A673 (cell line): ENCODE measurements at regions of chr17 and their contacts with region 1.

Region 1: GRCh38 chr17:58232707-58233156 is 5.7 kb upstream of the LPO start:
- DNase-seq: peak; percentile 33
- H3K4me3 ChIP-seq: no peak overlapping the region
- H3K27ac ChIP-seq: no peak overlapping the region
- H3K4me1 ChIP-seq: peaks cover 5% of the 10 kb centered on the region
- H3K27me3 ChIP-seq: peaks cover 18% of the 10 kb centered on the region
- CTCF ChIP-seq: no peak

Region 2: DNA sequence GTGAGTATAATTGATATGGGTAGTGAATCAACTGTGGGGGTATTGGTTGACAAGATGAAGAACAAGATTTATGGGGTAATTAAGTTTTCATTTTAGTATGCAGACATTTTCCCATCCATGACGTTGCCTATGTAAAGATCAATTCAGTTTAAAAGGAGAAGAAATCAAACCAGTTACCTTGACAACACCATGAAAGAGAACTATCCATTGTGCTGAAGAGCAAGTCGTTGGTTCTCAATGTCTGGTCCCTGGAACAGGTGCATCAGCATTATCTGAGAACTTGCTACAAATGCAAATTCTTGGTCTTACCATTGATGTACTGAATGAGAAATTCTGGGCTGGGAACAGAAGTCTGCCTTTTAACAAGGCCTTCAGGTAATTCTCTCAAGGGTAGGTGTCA is 66.8 kb before region 1 on chr17:
- CTCF ChIA-PET with region 1: no interaction called
- POLR2A ChIA-PET with region 1: no interaction called
- intact Hi-C with region 1: no loop called
- DNase-seq: no peak
- H3K4me3 ChIP-seq: no peak overlapping the region
- H3K27ac ChIP-seq: no peak overlapping the region
- H3K4me1 ChIP-seq: no peaks in the 10 kb centered on the region
- H3K27me3 ChIP-seq: peaks cover 98% of the 10 kb centered on the region
- CTCF ChIP-seq: no peak

Region 3: DNA sequence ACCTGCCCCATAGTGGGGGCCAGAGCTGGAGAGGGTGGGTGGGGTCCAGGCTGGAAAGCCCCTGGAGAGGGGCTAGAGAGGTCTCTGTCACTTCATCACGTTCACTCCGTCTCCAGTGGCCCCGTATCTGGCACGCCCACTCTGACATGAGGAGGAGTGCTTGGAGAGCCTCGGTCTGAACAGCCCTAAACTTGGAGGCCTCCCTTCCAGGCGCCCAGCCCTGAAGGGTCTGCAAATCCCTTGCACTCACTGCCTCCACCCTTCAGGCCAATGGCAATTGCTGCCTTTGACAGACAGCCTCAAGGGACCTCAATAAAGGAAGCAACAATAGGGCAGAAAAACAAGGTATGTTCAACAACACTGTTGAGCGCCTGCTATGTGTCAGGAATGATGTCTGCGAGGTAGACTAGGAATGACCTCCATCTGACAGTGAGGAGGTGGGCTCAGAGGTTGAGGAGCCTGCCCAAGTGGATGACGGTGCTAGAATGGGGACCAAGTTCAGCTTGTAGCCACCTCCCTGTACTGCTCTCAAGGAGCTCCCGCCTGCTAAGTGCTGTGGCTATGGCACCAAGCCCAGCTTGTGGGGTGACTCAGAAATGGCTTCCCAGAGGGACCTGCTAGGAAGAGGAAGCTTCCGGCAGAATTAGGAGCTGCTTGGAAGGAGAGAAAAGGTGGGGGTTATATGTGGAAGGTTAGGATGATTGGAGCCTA is 43.1 kb before region 1 on chr17:
- CTCF ChIA-PET with region 1: no interaction called
- POLR2A ChIA-PET with region 1: no interaction called
- intact Hi-C with region 1: no loop called
- DNase-seq: peak; percentile 84
- H3K4me3 ChIP-seq: no peak overlapping the region
- H3K27ac ChIP-seq: no peak overlapping the region
- H3K4me1 ChIP-seq: peaks cover 12% of the 10 kb centered on the region
- H3K27me3 ChIP-seq: no peaks in the 10 kb centered on the region
- CTCF ChIP-seq: no peak

Region 4: GRCh38 chr17:58249270-58250133 is 16.8 kb after region 1 on chr17:
- CTCF ChIA-PET with region 1: interaction called, 3 read pairs
- POLR2A ChIA-PET with region 1: interaction called, 15 read pairs
- intact Hi-C with region 1: no loop called
- DNase-seq: peak; percentile 70
- H3K4me3 ChIP-seq: peak overlapping the region; percentile 43
- H3K27ac ChIP-seq: no peak overlapping the region
- H3K4me1 ChIP-seq: peaks cover 8% of the 10 kb centered on the region
- H3K27me3 ChIP-seq: peaks cover 18% of the 10 kb centered on the region
- CTCF ChIP-seq: peak; percentile 97

Region 5: GRCh38 chr17:58276423-58276822 is 43.7 kb after region 1 on chr17:
- CTCF ChIA-PET with region 1: no interaction called
- POLR2A ChIA-PET with region 1: no interaction called
- intact Hi-C with region 1: no loop called
- DNase-seq: no peak
- H3K4me3 ChIP-seq: no peak overlapping the region
- H3K27ac ChIP-seq: no peak overlapping the region
- H3K4me1 ChIP-seq: no peaks in the 10 kb centered on the region
- H3K27me3 ChIP-seq: peaks cover 25% of the 10 kb centered on the region
- CTCF ChIP-seq: no peak